ENCODE measurements at regions of chr9 and their contacts with region 1.

Region 1: GRCh38 chr9:132154863-132155309 is 7.0 kb upstream of the NTNG2 start:
- DNase-seq: no peak
- H3K4me3 ChIP-seq: no peak overlapping the region
- H3K27ac ChIP-seq: no peak overlapping the region
- H3K4me1 ChIP-seq: no peaks in the 10 kb centered on the region
- H3K27me3 ChIP-seq: no peaks in the 10 kb centered on the region
- CTCF ChIP-seq: no peak

Region 2: DNA sequence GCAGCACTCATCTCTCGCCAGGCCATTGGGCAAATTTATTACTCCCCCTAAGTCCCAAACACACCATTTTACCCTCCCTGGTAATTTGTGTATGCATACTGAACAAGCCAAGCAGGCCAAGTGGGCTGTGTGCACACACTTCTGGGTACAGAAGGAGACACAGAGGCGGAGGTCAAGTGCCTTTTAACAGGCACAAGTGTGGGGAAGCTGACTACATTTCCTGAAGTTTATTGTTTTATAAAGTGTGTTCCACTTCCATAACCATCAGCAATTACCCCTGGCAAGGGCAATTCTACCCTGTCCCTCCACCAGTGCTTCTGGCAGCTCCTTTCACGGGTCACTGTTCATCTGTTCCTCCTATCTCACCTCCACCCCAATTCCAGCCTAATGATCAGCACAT is 106.0 kb after region 1 on chr9:
- CTCF ChIA-PET with region 1: no interaction called
- dilution Hi-C with region 1: loop called (anchors 5 kb)
- in situ Hi-C with region 1: no loop called
- intact Hi-C with region 1: no loop called
- DNase-seq: no peak
- H3K4me3 ChIP-seq: no peak overlapping the region
- H3K27ac ChIP-seq: no peak overlapping the region
- H3K4me1 ChIP-seq: no peaks in the 10 kb centered on the region
- H3K27me3 ChIP-seq: no peaks in the 10 kb centered on the region
- CTCF ChIP-seq: no peak